ENCODE measurements at regions of chr3 and their contacts with region 1.

Region 1: GRCh38 chr3:143011705-143012104 is 10.3 kb downstream of the U2SURP start:
- DNase-seq: no peak
- H3K4me3 ChIP-seq: no peak overlapping the region
- H3K27ac ChIP-seq: no peak overlapping the region
- H3K4me1 ChIP-seq: no peaks in the 10 kb centered on the region
- H3K27me3 ChIP-seq: no peaks in the 10 kb centered on the region

Region 2: GRCh38 chr3:142904639-142905436 is 106.9 kb before region 1 on chr3:
- CTCF ChIA-PET with region 1: no interaction called
- POLR2A ChIA-PET with region 1: no interaction called
- DNase-seq: peak; percentile 75 to 91 (median 89)
- H3K4me3 ChIP-seq: no peak overlapping the region
- H3K27ac ChIP-seq: no peak overlapping the region
- H3K4me1 ChIP-seq: peaks cover 0 to 7% (median 0%) of the 10 kb centered on the region in 4 experiments
- H3K27me3 ChIP-seq: no peaks in the 10 kb centered on the region

Region 3: GRCh38 chr3:143001369-143002082 is 10.2 kb before region 1 on chr3 and contains the start of gene U2SURP:
- CTCF ChIA-PET with region 1: interaction called, 21 read pairs
- POLR2A ChIA-PET with region 1: interaction called, 3 read pairs
- DNase-seq: peak; percentile 96 to 99 (median 98)
- H3K4me3 ChIP-seq: peak within 1 kb of the TSS; percentile 92 to 100 (median 97)
- H3K27ac ChIP-seq: peak within 1 kb of the TSS; percentile 95 to 98
- H3K4me1 ChIP-seq: peaks cover 11 to 24% (median 20%) of the 10 kb centered on the region in 4 experiments
- H3K27me3 ChIP-seq: no peaks in the 10 kb centered on the region

Region 4: GRCh38 chr3:143031327-143031726 is 19.6 kb after region 1 on chr3:
- CTCF ChIA-PET with region 1: no interaction called
- POLR2A ChIA-PET with region 1: no interaction called
- DNase-seq: no peak
- H3K4me3 ChIP-seq: no peak overlapping the region
- H3K27ac ChIP-seq: no peak overlapping the region
- H3K4me1 ChIP-seq: no peaks in the 10 kb centered on the region
- H3K27me3 ChIP-seq: no peaks in the 10 kb centered on the region

Region 5: GRCh38 chr3:143192193-143192592 is 180.5 kb after region 1 on chr3:
- CTCF ChIA-PET with region 1: no interaction called
- POLR2A ChIA-PET with region 1: no interaction called
- DNase-seq: no peak
- H3K4me3 ChIP-seq: no peak overlapping the region
- H3K27ac ChIP-seq: no peak overlapping the region
- H3K4me1 ChIP-seq: no peaks in the 10 kb centered on the region
- H3K27me3 ChIP-seq: no peaks in the 10 kb centered on the region

Measured in common myeloid progenitor, CD34-positive (primary cell).